HCT116 (cell line): ENCODE measurements at regions of chr4 and their contacts with region 1.

Region 1: GRCh38 chr4:153083447-153083947 is 120.7 kb upstream of the TRIM2 start:
- DNase-seq: peak; percentile 69
- ATAC-seq: peak; percentile 87
- H3K4me3 ChIP-seq: no peak overlapping the region
- H3K27ac ChIP-seq: no peak overlapping the region
- H3K4me1 ChIP-seq: peaks cover 0 to 16% of the 10 kb centered on the region in 2 experiments; a peak in 2 of 4 replicates
- H3K27me3 ChIP-seq: no peaks in the 10 kb centered on the region
- CTCF ChIP-seq: peak; percentile 57 to 87 (median 68)
- POLR2A ChIP-seq: no peak
- RAD21 ChIP-seq: peak; percentile 90

Region 2: DNA sequence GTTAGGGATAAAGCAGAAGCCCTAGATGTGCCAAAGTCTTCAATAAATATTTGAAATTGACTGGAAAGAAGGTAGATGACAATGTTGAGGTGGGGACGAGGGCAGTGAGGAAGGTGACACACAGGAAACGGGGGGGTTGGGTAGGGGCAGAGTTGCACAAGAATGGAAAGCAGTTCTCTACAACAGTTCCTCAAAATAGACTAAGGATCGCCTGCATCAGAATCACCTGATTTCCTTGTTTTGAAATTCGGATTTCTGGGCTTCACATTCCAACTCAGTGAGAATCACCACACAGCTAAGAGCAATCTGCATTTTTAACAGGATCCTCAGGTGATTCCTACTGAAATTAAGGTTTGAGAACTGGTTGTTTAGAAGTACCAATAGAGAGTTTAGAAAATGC is 233.1 kb before region 1 on chr4:
- CTCF ChIA-PET with region 1: interaction called, 7 read pairs
- POLR2A ChIA-PET with region 1: no interaction called
- RAD21 ChIA-PET with region 1: interaction called in 1 of 2 experiments, 3 read pairs
- intact Hi-C with region 1: loop called (anchors 1 kb)
- DNase-seq: no peak
- ATAC-seq: no peak
- H3K4me3 ChIP-seq: no peak overlapping the region
- H3K27ac ChIP-seq: no peak overlapping the region
- H3K4me1 ChIP-seq: no peaks in the 10 kb centered on the region
- H3K27me3 ChIP-seq: no peaks in the 10 kb centered on the region
- CTCF ChIP-seq: no peak
- POLR2A ChIP-seq: no peak
- RAD21 ChIP-seq: no peak

Region 3: DNA sequence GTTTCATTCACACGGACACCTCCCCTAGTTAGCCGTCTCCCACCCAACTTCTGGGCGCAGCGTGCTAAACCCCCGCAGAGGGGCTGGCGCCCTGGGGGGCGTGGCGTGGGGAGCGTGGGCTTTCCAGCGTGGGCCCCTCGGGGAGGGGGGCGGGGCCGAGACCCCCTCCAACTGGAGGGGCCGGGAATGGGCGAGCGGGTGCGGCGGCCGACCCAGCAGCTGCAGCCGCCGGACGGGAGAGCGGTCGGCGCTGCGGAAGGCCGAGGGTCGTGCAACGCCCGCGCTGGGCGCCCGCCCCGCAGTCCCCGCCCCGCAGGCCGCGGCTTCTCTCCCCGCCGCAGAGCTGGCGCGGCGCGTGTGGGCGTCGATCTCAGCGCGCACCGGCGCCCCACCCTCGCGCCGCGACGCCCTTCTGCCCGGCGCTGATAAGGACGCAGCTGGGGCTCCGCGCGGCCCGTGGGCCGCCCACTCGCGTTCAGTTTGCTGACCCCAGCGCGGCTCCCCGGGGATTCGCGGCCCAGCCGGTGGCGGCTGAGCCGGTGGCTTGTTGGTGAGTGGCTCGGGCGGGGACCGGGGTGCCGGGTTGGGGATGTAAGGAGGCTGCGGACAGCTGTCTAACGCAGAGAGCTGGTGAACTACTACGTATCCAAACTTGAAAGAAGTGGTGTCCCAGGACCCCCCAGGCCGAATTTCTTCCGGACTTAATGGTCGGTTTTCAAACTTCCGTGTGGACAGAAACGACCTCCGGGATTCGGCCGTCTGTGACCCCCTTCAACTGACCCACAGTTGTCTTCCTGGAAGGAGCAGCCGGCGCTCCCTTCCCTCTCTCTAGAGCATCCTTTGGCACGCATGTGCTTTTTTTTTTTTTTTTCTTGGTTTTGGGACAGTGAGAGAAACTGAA is 145.9 kb before region 1 on chr4:
- CTCF ChIA-PET with region 1: interaction called, 6 read pairs
- POLR2A ChIA-PET with region 1: no interaction called
- RAD21 ChIA-PET with region 1: no interaction called
- intact Hi-C with region 1: loop called (anchors 5 kb)
- DNase-seq: no peak
- ATAC-seq: peak; percentile 26
- H3K4me3 ChIP-seq: peak overlapping the region; percentile 60 to 66
- H3K27ac ChIP-seq: no peak overlapping the region
- H3K4me1 ChIP-seq: peaks cover 14 to 32% of the 10 kb centered on the region in 2 experiments
- H3K27me3 ChIP-seq: peaks cover 21% of the 10 kb centered on the region; the same call in 1 of the 2 replicates
- CTCF ChIP-seq: no peak
- POLR2A ChIP-seq: no peak
- RAD21 ChIP-seq: no peak

Region 4: GRCh38 chr4:153127760-153128494 is 44.4 kb after region 1 on chr4:
- CTCF ChIA-PET with region 1: interaction called, 56 read pairs
- POLR2A ChIA-PET with region 1: interaction called, 4 read pairs
- RAD21 ChIA-PET with region 1: interaction called, 3 to 11 read pairs
- intact Hi-C with region 1: loop called (anchors 1 kb)
- DNase-seq: peak; percentile 73
- ATAC-seq: peak; percentile 87
- H3K4me3 ChIP-seq: no peak overlapping the region
- H3K27ac ChIP-seq: no peak overlapping the region
- H3K4me1 ChIP-seq: peaks cover 0 to 5% of the 10 kb centered on the region in 2 experiments; a peak in 1 of 4 replicates
- H3K27me3 ChIP-seq: no peaks in the 10 kb centered on the region
- CTCF ChIP-seq: peak; percentile 68 to 91 (median 87)
- POLR2A ChIP-seq: no peak
- RAD21 ChIP-seq: peak; percentile 94

Region 5: GRCh38 chr4:153318696-153319320 is 235.3 kb after region 1 on chr4:
- CTCF ChIA-PET with region 1: interaction called, 4 read pairs
- POLR2A ChIA-PET with region 1: no interaction called
- RAD21 ChIA-PET with region 1: no interaction called
- intact Hi-C with region 1: loop called (anchors 2 kb)
- DNase-seq: peak; percentile 39
- ATAC-seq: peak; percentile 93
- H3K4me3 ChIP-seq: no peak overlapping the region
- H3K27ac ChIP-seq: no peak overlapping the region
- H3K4me1 ChIP-seq: no peaks in the 10 kb centered on the region
- H3K27me3 ChIP-seq: no peaks in the 10 kb centered on the region
- CTCF ChIP-seq: peak; percentile 68 to 85 (median 74); a peak in 5 of 6 replicates
- POLR2A ChIP-seq: no peak
- RAD21 ChIP-seq: peak; percentile 83

Region 6: GRCh38 chr4:153643406-153644383 is 560.2 kb after region 1 on chr4:
- CTCF ChIA-PET with region 1: interaction called, 4 read pairs
- POLR2A ChIA-PET with region 1: no interaction called
- RAD21 ChIA-PET with region 1: no interaction called
- intact Hi-C with region 1: loop called (anchors 2 kb)
- DNase-seq: peak; percentile 46
- ATAC-seq: peak; percentile 90
- H3K4me3 ChIP-seq: no peak overlapping the region
- H3K27ac ChIP-seq: no peak overlapping the region
- H3K4me1 ChIP-seq: 0 out of 4 replicates have a peak, but pooled peaks cover 0 to 5% of the 10 kb centered on the region in 2 experiments
- H3K27me3 ChIP-seq: no peaks in the 10 kb centered on the region
- CTCF ChIP-seq: peak; percentile 32 to 71 (median 63); a peak in 5 of 6 replicates
- POLR2A ChIP-seq: no peak
- RAD21 ChIP-seq: peak; percentile 75